Endothelial cell of umbilical vein (primary cell): ENCODE measurements at regions of chr2 and their contacts with region 1.

Region 1: GRCh38 chr2:150513647-150514046 is 26.2 kb upstream of the RND3 start:
- DNase-seq: no peak
- H3K4me3 ChIP-seq: no peak overlapping the region
- H3K27ac ChIP-seq: no peak overlapping the region
- H3K4me1 ChIP-seq: no peaks in the 10 kb centered on the region
- H3K27me3 ChIP-seq: no peaks in the 10 kb centered on the region
- CTCF ChIP-seq: no peak
- POLR2A ChIP-seq: no peak

Region 2: GRCh38 chr2:150403457-150403856 is 110.2 kb before region 1 on chr2:
- CTCF ChIA-PET with region 1: no interaction called
- POLR2A ChIA-PET with region 1: no interaction called
- dilution Hi-C with region 1: no loop called
- intact Hi-C with region 1: loop called (anchors 1 kb)
- DNase-seq: peak; percentile 65
- H3K4me3 ChIP-seq: peak overlapping the region; percentile 15 to 64 (median 15)
- H3K27ac ChIP-seq: peak overlapping the region; percentile 70
- H3K4me1 ChIP-seq: peaks cover 10% of the 10 kb centered on the region
- H3K27me3 ChIP-seq: no peaks in the 10 kb centered on the region
- CTCF ChIP-seq: no peak
- POLR2A ChIP-seq: no peak

Region 3: DNA sequence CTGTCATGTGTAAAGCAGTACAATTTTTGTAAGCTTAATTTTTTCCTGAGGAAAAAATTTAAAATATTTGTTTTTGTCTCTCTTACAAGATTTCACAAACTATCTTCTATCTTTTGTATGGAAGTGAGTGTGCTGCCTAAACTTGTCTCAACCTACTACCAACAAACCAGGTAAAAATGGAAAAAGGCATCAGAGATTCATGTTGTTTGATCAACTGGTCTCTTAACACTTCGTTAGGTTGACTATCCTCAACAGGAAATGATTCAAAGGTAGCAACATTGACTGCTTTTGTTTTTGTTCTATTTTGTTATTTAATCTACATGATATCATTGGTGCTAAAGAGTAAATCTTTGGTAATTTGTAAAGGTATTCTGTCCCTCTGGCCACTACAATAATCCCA is 21.5 kb after region 1 on chr2:
- CTCF ChIA-PET with region 1: no interaction called
- POLR2A ChIA-PET with region 1: no interaction called
- dilution Hi-C with region 1: no loop called
- intact Hi-C with region 1: no loop called
- DNase-seq: peak; percentile 29
- H3K4me3 ChIP-seq: no peak overlapping the region
- H3K27ac ChIP-seq: no peak overlapping the region
- H3K4me1 ChIP-seq: peaks cover 5% of the 10 kb centered on the region
- H3K27me3 ChIP-seq: no peaks in the 10 kb centered on the region
- CTCF ChIP-seq: no peak
- POLR2A ChIP-seq: no peak

Region 4: DNA sequence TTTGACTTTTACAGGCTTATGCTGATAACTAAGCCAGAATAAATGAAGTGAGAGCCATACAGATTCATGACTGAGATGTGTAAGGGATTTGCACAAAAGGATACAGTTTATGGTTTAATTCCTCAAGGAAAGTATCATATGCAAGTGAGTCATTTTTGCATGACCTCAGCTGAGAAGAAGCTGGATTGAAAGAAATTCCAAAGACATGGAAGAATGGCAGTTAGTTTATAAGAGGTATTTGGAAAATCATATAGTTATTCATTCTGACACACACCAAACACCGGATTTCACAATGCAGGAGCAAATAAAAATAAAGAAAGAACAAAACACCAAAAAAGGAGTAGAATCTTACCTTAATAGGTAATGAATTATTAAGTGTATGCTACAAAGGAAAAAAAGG is 57.1 kb after region 1 on chr2:
- CTCF ChIA-PET with region 1: no interaction called
- POLR2A ChIA-PET with region 1: no interaction called
- dilution Hi-C with region 1: no loop called
- intact Hi-C with region 1: no loop called
- DNase-seq: peak; percentile 78
- H3K4me3 ChIP-seq: no peak overlapping the region
- H3K27ac ChIP-seq: no peak overlapping the region
- H3K4me1 ChIP-seq: peaks cover 8% of the 10 kb centered on the region
- H3K27me3 ChIP-seq: no peaks in the 10 kb centered on the region
- CTCF ChIP-seq: no peak
- POLR2A ChIP-seq: no peak